ENCODE measurements at regions of chr17 and their contacts with region 1.

Region 1: GRCh38 chr17:57130761-57131461 is 45.9 kb downstream of the AKAP1 start:
- DNase-seq: peak; percentile 75
- ATAC-seq: peak; percentile 77
- H3K4me3 ChIP-seq: no peak overlapping the region
- H3K27ac ChIP-seq: no peak overlapping the region
- H3K4me1 ChIP-seq: peaks cover 22% of the 10 kb centered on the region
- H3K27me3 ChIP-seq: no peaks in the 10 kb centered on the region
- CTCF ChIP-seq: peak; percentile 84
- EP300 ChIP-seq: no peak
- POLR2A ChIP-seq: no peak
- RAD21 ChIP-seq: peak; percentile 61; the same call in 1 of the 2 replicates

Region 2: GRCh38 chr17:57440522-57441485 is 309.9 kb after region 1 on chr17:
- CTCF ChIA-PET with region 1: no interaction called
- POLR2A ChIA-PET with region 1: no interaction called
- in situ Hi-C with region 1: no loop called
- intact Hi-C with region 1: loop called (anchors 1 kb)
- DNase-seq: peak; percentile 91
- ATAC-seq: peak; percentile 84
- H3K4me3 ChIP-seq: peak overlapping the region in 2 of 3 experiments; percentile 17 to 54; a peak in 3 of 6 replicates
- H3K27ac ChIP-seq: peak overlapping the region; percentile 64
- H3K4me1 ChIP-seq: peaks cover 84% of the 10 kb centered on the region
- H3K27me3 ChIP-seq: no peaks in the 10 kb centered on the region
- CTCF ChIP-seq: peak; percentile 88
- EP300 ChIP-seq: no peak
- POLR2A ChIP-seq: no peak
- RAD21 ChIP-seq: peak; percentile 89

Region 3: GRCh38 chr17:57604771-57605674 is 474.1 kb after region 1 on chr17:
- CTCF ChIA-PET with region 1: no interaction called
- POLR2A ChIA-PET with region 1: no interaction called
- in situ Hi-C with region 1: loop called (anchors 10 kb)
- intact Hi-C with region 1: no loop called
- DNase-seq: no peak
- ATAC-seq: no peak
- H3K4me3 ChIP-seq: no peak overlapping the region
- H3K27ac ChIP-seq: no peak overlapping the region
- H3K4me1 ChIP-seq: peaks cover 41% of the 10 kb centered on the region
- H3K27me3 ChIP-seq: no peaks in the 10 kb centered on the region
- CTCF ChIP-seq: no peak
- EP300 ChIP-seq: no peak
- POLR2A ChIP-seq: no peak
- RAD21 ChIP-seq: no peak

Region 4: GRCh38 chr17:57739402-57740392 is 608.8 kb after region 1 on chr17:
- CTCF ChIA-PET with region 1: interaction called, 15 read pairs
- POLR2A ChIA-PET with region 1: no interaction called
- in situ Hi-C with region 1: loop called (anchors 5 kb)
- intact Hi-C with region 1: loop called (anchors 2 kb)
- DNase-seq: peak; percentile 53
- ATAC-seq: peak; percentile 91
- H3K4me3 ChIP-seq: no peak overlapping the region
- H3K27ac ChIP-seq: no peak overlapping the region
- H3K4me1 ChIP-seq: no peaks in the 10 kb centered on the region
- H3K27me3 ChIP-seq: peaks cover 0 to 27% of the 10 kb centered on the region in 2 experiments; a peak in 3 of 5 replicates
- CTCF ChIP-seq: peak; percentile 82
- EP300 ChIP-seq: no peak
- POLR2A ChIP-seq: no peak
- RAD21 ChIP-seq: 0 out of 2 replicates have a peak, but pooled peaks have one; percentile 36

Region 5: GRCh38 chr17:57747221-57748017 is 616.5 kb after region 1 on chr17:
- CTCF ChIA-PET with region 1: interaction called, 10 read pairs
- POLR2A ChIA-PET with region 1: no interaction called
- in situ Hi-C with region 1: no loop called
- intact Hi-C with region 1: no loop called
- DNase-seq: peak; percentile 54
- ATAC-seq: peak; percentile 58
- H3K4me3 ChIP-seq: no peak overlapping the region
- H3K27ac ChIP-seq: no peak overlapping the region
- H3K4me1 ChIP-seq: peaks cover 26% of the 10 kb centered on the region
- H3K27me3 ChIP-seq: peaks cover 0 to 43% of the 10 kb centered on the region in 2 experiments; a peak in 3 of 5 replicates
- CTCF ChIP-seq: peak; percentile 89
- EP300 ChIP-seq: no peak
- POLR2A ChIP-seq: no peak
- RAD21 ChIP-seq: peak; percentile 49; the same call in 1 of the 2 replicates

Region 6: DNA sequence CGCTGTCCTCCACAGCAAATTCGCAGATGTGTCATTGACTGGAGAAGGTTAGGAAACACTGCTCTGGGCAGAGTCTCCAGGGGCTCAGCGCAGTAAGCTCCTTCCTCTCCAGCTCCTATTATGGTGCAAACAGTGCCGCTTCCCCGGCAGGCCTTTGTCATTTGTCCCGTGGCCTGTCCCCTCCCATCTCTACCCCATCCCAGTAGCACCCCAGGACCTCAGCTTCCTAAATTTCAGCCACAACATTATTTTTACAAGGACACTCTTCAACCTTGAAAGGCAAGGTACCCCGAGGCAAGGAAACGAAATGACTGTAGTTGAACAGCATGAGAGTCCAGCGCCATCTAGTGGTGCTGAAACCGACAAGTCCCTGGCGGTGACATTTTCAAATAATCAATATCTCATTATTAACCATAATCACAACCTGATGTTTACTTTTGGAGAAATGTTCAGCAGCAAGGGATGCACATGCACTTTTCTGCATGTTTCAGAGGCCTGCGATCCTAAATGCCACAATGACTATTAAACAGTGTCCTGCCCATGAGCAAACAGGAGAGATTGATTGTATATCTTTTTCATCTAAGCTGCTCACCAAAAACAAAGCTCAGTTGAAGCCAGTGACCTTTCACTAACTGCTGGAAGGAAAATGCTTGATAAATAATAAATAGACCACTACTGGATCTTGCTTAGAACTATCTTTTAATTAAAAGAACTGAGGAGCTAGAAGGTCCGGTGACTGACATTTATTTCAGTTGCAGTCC is 702.4 kb after region 1 on chr17:
- CTCF ChIA-PET with region 1: interaction called, 4 read pairs
- POLR2A ChIA-PET with region 1: no interaction called
- in situ Hi-C with region 1: no loop called
- intact Hi-C with region 1: loop called (anchors 1 kb)
- DNase-seq: peak; percentile 72
- ATAC-seq: peak; percentile 92
- H3K4me3 ChIP-seq: peak overlapping the region; percentile 54 to 74 (median 68)
- H3K27ac ChIP-seq: peak overlapping the region; percentile 41
- H3K4me1 ChIP-seq: peaks cover 69% of the 10 kb centered on the region
- H3K27me3 ChIP-seq: no peaks in the 10 kb centered on the region; a peak in 1 of 5 replicates
- CTCF ChIP-seq: peak; percentile 96
- EP300 ChIP-seq: peak in 1 of 2 experiments; percentile 53; a peak in 1 of 4 replicates
- POLR2A ChIP-seq: no peak
- RAD21 ChIP-seq: peak; percentile 73

Region 7: GRCh38 chr17:58112970-58113631 is 982.2 kb after region 1 on chr17:
- CTCF ChIA-PET with region 1: no interaction called
- POLR2A ChIA-PET with region 1: no interaction called
- in situ Hi-C with region 1: no loop called
- intact Hi-C with region 1: loop called (anchors 5 kb)
- DNase-seq: peak; percentile 70
- ATAC-seq: peak; percentile 84
- H3K4me3 ChIP-seq: no peak overlapping the region
- H3K27ac ChIP-seq: no peak overlapping the region
- H3K4me1 ChIP-seq: no peaks in the 10 kb centered on the region
- H3K27me3 ChIP-seq: peaks cover 1 to 4% of the 10 kb centered on the region in 2 experiments; a peak in 3 of 5 replicates
- CTCF ChIP-seq: peak; percentile 98
- EP300 ChIP-seq: no peak
- POLR2A ChIP-seq: no peak
- RAD21 ChIP-seq: peak; percentile 93